B cell (primary cell): ENCODE measurements at regions of chr5 and their contacts with region 1.

Region 1: GRCh38 chr5:43313035-43313853 is at the start of gene HMGCS1:
- DNase-seq: peak; percentile 100
- ATAC-seq: peak; percentile 84
- H3K4me3 ChIP-seq: peak within 1 kb of the TSS; percentile 77 to 94 (median 89)
- H3K4me3 Mint-ChIP-seq: peak within 1 kb of the TSS; percentile 99
- H3K27ac ChIP-seq: peak within 1 kb of the TSS; percentile 95 to 98
- H3K27ac Mint-ChIP-seq: peak within 1 kb of the TSS; percentile 97
- H3K4me1 ChIP-seq: peaks cover 18 to 31% of the 10 kb centered on the region in 2 donors
- H3K4me1 Mint-ChIP-seq: peaks cover 39% of the 10 kb centered on the region
- H3K27me3 ChIP-seq: no peaks in the 10 kb centered on the region
- H3K27me3 Mint-ChIP-seq: no peaks in the 10 kb centered on the region
- CTCF ChIP-seq: no peak
- total RNA-seq, gene HMGCS1: 68.4 and 68.7 TPM in 2 replicates

Region 2: GRCh38 chr5:41924872-41925554 is 1388.2 kb before region 1 on chr5 and contains the start of gene FBXO4:
- CTCF ChIA-PET with region 1: no interaction called
- POLR2A ChIA-PET with region 1: no interaction called
- intact Hi-C with region 1: loop called (anchors 5 kb)
- DNase-seq: peak; percentile 95
- ATAC-seq: peak; percentile 93
- H3K4me3 ChIP-seq: peak within 1 kb of the TSS; percentile 72 to 87 (median 77)
- H3K4me3 Mint-ChIP-seq: peak within 1 kb of the TSS; percentile 86
- H3K27ac ChIP-seq: peak within 1 kb of the TSS; percentile 96 to 98
- H3K27ac Mint-ChIP-seq: peak within 1 kb of the TSS; percentile 95
- H3K4me1 ChIP-seq: peaks cover 13 to 17% of the 10 kb centered on the region in 2 donors
- H3K4me1 Mint-ChIP-seq: peaks cover 27% of the 10 kb centered on the region
- H3K27me3 ChIP-seq: no peaks in the 10 kb centered on the region
- H3K27me3 Mint-ChIP-seq: no peaks in the 10 kb centered on the region
- CTCF ChIP-seq: peak; percentile 67
- total RNA-seq, gene FBXO4: 17.1 and 17.9 TPM in 2 replicates

Region 3: DNA sequence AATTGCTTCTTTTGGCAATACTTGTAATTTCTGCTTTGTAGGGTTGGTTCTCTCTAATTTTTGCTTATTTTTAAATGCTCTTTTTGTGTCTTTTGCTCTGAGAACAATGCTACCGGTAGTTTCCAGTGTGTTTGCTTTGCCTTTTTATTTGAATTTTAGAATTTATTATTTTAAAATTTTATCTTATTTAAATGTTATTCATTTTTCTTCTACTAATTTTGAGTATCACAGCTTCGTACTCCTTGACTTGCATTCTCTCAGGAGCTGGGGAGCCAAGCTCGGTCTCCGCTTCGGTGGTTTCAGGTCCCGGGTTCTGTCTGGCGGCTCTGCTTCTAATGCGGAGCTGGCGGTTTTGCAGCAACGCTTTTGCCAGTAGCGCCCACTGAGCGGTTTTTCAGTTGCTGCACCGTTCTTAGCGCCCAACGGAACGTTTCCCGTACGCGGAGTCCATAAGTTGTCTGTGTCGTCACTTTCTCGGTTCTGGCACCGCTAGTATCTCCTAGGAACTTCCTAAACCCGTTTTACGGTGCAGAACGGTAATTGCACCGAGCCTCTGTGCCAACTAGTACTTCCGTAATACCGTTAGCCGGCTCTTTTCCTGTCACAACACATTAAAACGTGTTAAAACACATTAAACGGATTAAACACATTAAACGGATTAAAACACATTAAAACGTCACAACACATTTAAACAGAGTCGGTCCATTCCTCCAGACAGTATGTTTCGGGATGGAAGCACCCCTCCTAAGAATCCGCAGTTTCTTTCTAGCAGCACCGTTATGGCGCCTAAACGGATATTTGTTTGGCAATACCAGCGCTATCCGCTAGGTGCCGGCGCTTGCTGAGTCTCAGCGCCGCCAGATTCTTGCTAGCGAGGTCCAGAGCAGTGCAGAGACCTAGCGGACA is 318.7 kb before region 1 on chr5:
- CTCF ChIA-PET with region 1: no interaction called
- POLR2A ChIA-PET with region 1: no interaction called
- intact Hi-C with region 1: loop called (anchors 2 kb)
- DNase-seq: peak; percentile 94
- ATAC-seq: peak; percentile 67
- H3K4me3 ChIP-seq: peak overlapping the region; percentile 78 to 97 (median 89)
- H3K4me3 Mint-ChIP-seq: peak overlapping the region; percentile 96
- H3K27ac ChIP-seq: peak overlapping the region; percentile 93 to 96
- H3K27ac Mint-ChIP-seq: peak overlapping the region; percentile 100
- H3K4me1 ChIP-seq: peaks cover 23 to 30% of the 10 kb centered on the region in 2 donors
- H3K4me1 Mint-ChIP-seq: peaks cover 32% of the 10 kb centered on the region
- H3K27me3 ChIP-seq: peaks cover 0 to 9% (median 1%) of the 10 kb centered on the region in 4 experiments
- H3K27me3 Mint-ChIP-seq: no peaks in the 10 kb centered on the region
- CTCF ChIP-seq: peak; percentile 84

Region 4: DNA sequence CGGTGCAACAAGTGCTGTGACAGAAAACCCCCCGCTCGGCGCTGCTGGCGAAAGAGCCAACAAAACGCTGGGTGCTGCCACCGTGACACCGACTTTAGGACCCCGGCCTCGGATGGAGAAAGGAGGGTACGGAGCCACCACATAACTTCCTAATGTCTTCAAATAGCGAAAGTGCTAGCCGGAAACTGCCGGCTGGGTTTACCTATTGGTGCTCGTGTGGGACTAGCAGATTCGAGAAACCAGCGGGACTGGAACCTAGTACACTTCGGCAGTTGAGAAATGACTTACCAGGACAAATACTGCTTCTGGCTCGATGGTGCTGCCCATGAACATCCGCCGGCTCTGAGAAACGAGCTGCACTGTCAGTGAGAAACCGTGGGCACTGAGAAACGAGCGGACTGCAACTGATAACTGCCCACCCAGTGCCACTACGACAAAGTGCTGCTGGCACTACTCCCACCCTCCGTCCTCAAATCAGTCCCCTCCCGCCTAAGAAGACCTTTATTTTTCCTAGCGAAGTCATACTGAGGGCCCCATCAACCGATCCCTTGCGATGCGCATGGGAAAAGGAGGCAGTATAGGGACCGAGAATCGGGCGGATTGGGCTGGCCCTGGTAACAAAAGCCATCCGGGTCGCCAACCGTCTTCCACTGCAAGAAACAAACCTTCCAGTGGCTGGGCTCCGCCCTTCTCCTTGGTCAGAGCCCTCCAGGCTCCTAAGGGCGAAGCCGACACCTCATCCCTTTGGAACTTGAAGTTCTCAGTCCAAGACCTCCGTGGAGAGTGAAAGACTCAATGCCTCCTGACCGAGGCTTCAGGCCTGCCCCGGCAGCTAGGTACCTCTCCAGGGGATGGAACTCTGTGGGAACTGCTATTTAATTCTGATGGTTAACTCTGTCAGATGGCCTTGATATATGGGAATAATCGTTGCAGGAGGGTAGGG is 246.2 kb before region 1 on chr5:
- CTCF ChIA-PET with region 1: no interaction called
- POLR2A ChIA-PET with region 1: interaction called, 3 read pairs
- intact Hi-C with region 1: loop called (anchors 1 kb)
- DNase-seq: peak; percentile 96
- ATAC-seq: peak; percentile 46
- H3K4me3 ChIP-seq: peak overlapping the region; percentile 87 to 100 (median 90)
- H3K4me3 Mint-ChIP-seq: peak overlapping the region; percentile 99
- H3K27ac ChIP-seq: peak overlapping the region; percentile 98 to 99
- H3K27ac Mint-ChIP-seq: peak overlapping the region; percentile 100
- H3K4me1 ChIP-seq: peaks cover 19 to 29% of the 10 kb centered on the region in 2 donors
- H3K4me1 Mint-ChIP-seq: peaks cover 37% of the 10 kb centered on the region
- H3K27me3 ChIP-seq: no peaks in the 10 kb centered on the region
- H3K27me3 Mint-ChIP-seq: no peaks in the 10 kb centered on the region
- CTCF ChIP-seq: no peak

Region 5: DNA sequence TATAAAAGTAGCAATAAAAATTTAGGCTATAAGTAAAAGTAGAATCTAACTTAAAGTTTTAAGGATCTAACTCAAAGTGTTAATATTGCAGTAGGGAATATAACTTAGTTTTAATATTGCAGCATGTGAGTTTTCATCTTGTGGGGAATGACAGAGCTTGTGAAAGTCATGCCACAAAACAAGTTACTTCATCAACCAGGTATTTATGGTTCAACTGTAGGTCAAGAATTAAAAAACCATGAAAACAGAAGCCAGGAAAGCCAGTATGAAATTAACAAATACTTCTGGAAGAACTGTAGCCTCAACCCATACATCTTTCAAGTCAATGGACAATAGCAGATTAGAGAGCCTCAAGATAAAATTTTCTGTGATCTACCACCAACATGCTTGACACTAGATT is 19.0 kb before region 1 on chr5:
- CTCF ChIA-PET with region 1: no interaction called
- POLR2A ChIA-PET with region 1: no interaction called
- intact Hi-C with region 1: no loop called
- DNase-seq: no peak
- ATAC-seq: no peak
- H3K4me3 ChIP-seq: no peak overlapping the region
- H3K4me3 Mint-ChIP-seq: no peak overlapping the region
- H3K27ac ChIP-seq: no peak overlapping the region
- H3K27ac Mint-ChIP-seq: no peak overlapping the region
- H3K4me1 ChIP-seq: no peaks in the 10 kb centered on the region
- H3K4me1 Mint-ChIP-seq: no peaks in the 10 kb centered on the region
- H3K27me3 ChIP-seq: no peaks in the 10 kb centered on the region
- H3K27me3 Mint-ChIP-seq: no peaks in the 10 kb centered on the region
- CTCF ChIP-seq: no peak

Region 6: DNA sequence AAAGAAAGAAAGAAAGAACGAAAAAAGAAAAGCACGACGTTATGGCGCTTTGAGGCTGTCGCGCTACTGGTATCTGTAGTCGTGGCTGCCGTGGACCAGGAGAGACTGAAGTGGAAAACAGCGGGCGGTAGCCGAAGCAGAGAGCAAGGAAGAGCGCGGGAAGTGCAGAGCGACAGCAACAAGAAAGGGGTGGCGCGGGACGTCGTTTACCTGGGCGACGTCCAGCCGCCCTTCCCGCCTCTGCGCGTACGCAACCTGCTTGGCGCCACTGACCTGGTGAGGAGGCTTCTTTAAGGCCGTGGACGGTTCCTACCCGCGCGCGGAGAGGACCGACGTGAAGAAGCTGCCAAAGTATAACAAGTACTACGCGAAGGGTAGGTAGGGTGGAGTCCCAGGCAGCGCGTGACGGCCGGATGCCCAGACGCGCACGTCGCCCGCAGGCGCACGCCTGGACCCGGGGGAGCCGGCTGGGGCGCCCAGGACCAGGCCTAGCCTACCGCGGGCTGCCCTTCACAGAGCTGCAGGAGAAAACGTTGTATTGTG is 83.6 kb after region 1 on chr5:
- CTCF ChIA-PET with region 1: no interaction called
- POLR2A ChIA-PET with region 1: interaction called, 4 read pairs
- intact Hi-C with region 1: loop called (anchors 2 kb)
- DNase-seq: peak; percentile 82
- ATAC-seq: peak; percentile 96
- H3K4me3 ChIP-seq: peak overlapping the region; percentile 65 to 89 (median 77)
- H3K4me3 Mint-ChIP-seq: peak overlapping the region; percentile 95
- H3K27ac ChIP-seq: peak overlapping the region; percentile 81 to 83
- H3K27ac Mint-ChIP-seq: peak overlapping the region; percentile 93
- H3K4me1 ChIP-seq: peaks cover 9 to 10% of the 10 kb centered on the region in 2 donors
- H3K4me1 Mint-ChIP-seq: peaks cover 21% of the 10 kb centered on the region
- H3K27me3 ChIP-seq: no peaks in the 10 kb centered on the region
- H3K27me3 Mint-ChIP-seq: no peaks in the 10 kb centered on the region
- CTCF ChIP-seq: no peak

Region 7: GRCh38 chr5:43556857-43557542 is 243.8 kb after region 1 on chr5 and contains the start of gene PAIP1:
- CTCF ChIA-PET with region 1: no interaction called
- POLR2A ChIA-PET with region 1: no interaction called
- intact Hi-C with region 1: loop called (anchors 1 kb)
- DNase-seq: peak; percentile 95
- ATAC-seq: peak; percentile 73
- H3K4me3 ChIP-seq: peak within 1 kb of the TSS; percentile 66 to 83 (median 79)
- H3K4me3 Mint-ChIP-seq: peak within 1 kb of the TSS; percentile 93
- H3K27ac ChIP-seq: peak within 1 kb of the TSS; percentile 81 to 91
- H3K27ac Mint-ChIP-seq: peak within 1 kb of the TSS; percentile 92
- H3K4me1 ChIP-seq: peaks cover 14 to 31% of the 10 kb centered on the region in 2 donors
- H3K4me1 Mint-ChIP-seq: peaks cover 16% of the 10 kb centered on the region
- H3K27me3 ChIP-seq: no peaks in the 10 kb centered on the region
- H3K27me3 Mint-ChIP-seq: no peaks in the 10 kb centered on the region
- CTCF ChIP-seq: peak; percentile 87
- total RNA-seq, gene PAIP1: 31.8 and 35.9 TPM in 2 replicates